Heart right ventricle (tissue), 16 donors: ENCODE measurements at regions of chr1 and their contacts with region 1.

Region 1: DNA sequence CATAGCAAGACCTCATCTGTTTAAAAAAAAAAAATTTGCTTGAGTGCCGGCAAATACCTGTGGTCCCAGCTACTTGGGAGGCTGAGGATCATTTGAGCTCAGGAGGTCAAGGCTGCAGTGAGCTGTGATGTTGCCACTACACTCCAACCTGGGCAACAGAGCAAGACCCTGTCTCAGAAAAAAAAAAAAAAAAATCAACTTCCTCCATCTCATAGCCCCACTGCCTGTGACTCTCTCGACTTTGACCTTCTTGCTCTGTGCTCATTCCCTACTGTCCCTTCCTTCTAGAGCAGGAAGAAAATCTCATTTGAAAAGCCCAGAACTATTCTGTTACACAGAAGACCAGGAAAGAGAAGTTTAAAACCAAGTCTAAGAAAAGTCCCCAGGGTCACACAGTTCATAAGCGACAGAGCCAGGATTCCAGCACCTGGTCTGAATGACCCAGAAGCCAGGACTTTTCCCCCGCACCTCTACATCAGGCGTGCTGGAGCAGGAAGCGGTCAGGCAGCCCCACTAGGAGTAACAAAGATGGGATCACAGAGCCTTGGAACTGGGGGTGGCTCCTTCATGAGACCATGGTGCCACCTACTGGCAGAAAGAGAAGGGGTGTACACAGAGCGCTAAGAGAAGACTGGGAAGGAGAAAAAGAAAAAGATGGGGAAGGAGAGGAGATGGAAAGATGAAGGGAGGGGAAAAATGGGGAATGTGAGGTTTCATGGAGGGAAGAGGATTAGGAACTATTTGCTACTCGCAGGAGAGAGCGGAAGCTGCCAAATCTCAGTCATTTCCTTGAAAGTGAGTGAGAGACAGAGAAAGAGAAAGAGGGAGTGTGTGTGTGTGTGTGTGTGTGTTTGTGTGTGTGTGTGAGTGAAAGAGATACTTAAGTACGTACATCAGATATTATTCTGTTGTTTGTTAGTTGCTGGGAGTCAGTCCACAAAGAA is 3.1 kb upstream of the P3R3URF start:
- DNase-seq: peak; percentile 59 to 88
- ATAC-seq: peak; percentile 72 to 92 (median 87)
- H3K4me3 ChIP-seq: peak overlapping the region in 2 of 10 donors; percentile 10 to 33
- H3K27ac ChIP-seq: peak overlapping the region in 8 of 10 donors; percentile 23 to 69 (median 56)
- H3K4me1 ChIP-seq: peaks cover 7 to 70% (median 42%) of the 10 kb centered on the region in 9 donors
- H3K27me3 ChIP-seq: no peaks in the 10 kb centered on the region
- CTCF ChIP-seq: peak; percentile 85 to 95 (median 89)

Region 2: GRCh38 chr1:45884700-45885099 is 294.7 kb before region 1 on chr1:
- intact Hi-C with region 1: loop called in 1 of 10 experiments (anchors 10 kb)
- DNase-seq: no peak
- ATAC-seq: no peak
- H3K4me3 ChIP-seq: no peak overlapping the region
- H3K27ac ChIP-seq: no peak overlapping the region
- H3K4me1 ChIP-seq: peaks cover 0 to 5% (median 0%) of the 10 kb centered on the region in 9 donors
- H3K27me3 ChIP-seq: no peaks in the 10 kb centered on the region
- CTCF ChIP-seq: no peak

Region 3: GRCh38 chr1:46036894-46037839 is 142.2 kb before region 1 on chr1:
- intact Hi-C with region 1: loop called (anchors 1 to 2 kb)
- DNase-seq: peak; percentile 82 to 89
- ATAC-seq: peak; percentile 42 to 81 (median 70)
- H3K4me3 ChIP-seq: no peak overlapping the region
- H3K27ac ChIP-seq: peak overlapping the region in 8 of 10 donors; percentile 2 to 46 (median 30)
- H3K4me1 ChIP-seq: peaks cover 8 to 64% (median 51%) of the 10 kb centered on the region in 9 donors
- H3K27me3 ChIP-seq: no peaks in the 10 kb centered on the region
- CTCF ChIP-seq: peak; percentile 96 to 98 (median 98)

Region 4: GRCh38 chr1:46094474-46095005 is 84.9 kb before region 1 on chr1:
- intact Hi-C with region 1: loop called in 1 of 10 experiments (anchors 5 kb)
- DNase-seq: no peak
- ATAC-seq: no peak
- H3K4me3 ChIP-seq: no peak overlapping the region
- H3K27ac ChIP-seq: no peak overlapping the region
- H3K4me1 ChIP-seq: peaks cover 0 to 13% (median 4%) of the 10 kb centered on the region in 9 donors
- H3K27me3 ChIP-seq: no peaks in the 10 kb centered on the region
- CTCF ChIP-seq: no peak

Region 5: GRCh38 chr1:46113948-46114347 is 65.5 kb before region 1 on chr1:
- intact Hi-C with region 1: loop called in 1 of 10 experiments (anchors 10 kb)
- DNase-seq: no peak
- ATAC-seq: peak in 1 of 8 donors; percentile 33
- H3K4me3 ChIP-seq: no peak overlapping the region
- H3K27ac ChIP-seq: no peak overlapping the region
- H3K4me1 ChIP-seq: peaks cover 0 to 78% (median 50%) of the 10 kb centered on the region in 9 donors
- H3K27me3 ChIP-seq: no peaks in the 10 kb centered on the region
- CTCF ChIP-seq: no peak

Region 6: DNA sequence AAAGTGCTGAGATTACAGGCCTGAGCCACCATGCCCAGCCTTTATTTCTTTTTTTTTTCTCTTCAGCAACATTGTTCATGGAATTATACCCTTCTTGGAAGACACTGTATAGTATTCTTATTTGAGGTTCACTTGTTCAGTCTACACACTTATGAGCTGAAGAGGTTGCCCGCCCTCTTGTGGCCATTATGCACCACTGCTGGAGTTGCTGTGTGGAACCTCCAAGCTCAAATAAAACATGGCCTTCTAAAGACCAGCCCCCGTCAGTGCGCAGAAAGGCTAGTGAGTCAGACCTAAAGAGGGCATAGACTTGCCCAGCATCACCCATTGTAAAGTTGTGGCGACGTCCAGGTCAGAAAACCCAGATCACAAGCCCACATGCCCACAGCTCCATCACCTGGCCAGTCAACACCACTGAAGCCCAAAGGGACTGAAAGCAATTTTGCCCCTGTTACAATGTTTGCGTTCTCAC is 44.1 kb after region 1 on chr1:
- intact Hi-C with region 1: loop called in 3 of 10 experiments (anchors 5 kb)
- DNase-seq: peak in 1 of 2 donors; percentile 60
- ATAC-seq: peak; percentile 83 to 91 (median 86)
- H3K4me3 ChIP-seq: no peak overlapping the region
- H3K27ac ChIP-seq: no peak overlapping the region
- H3K4me1 ChIP-seq: peaks cover 0 to 27% (median 0%) of the 10 kb centered on the region in 9 donors
- H3K27me3 ChIP-seq: no peaks in the 10 kb centered on the region
- CTCF ChIP-seq: peak; percentile 72 to 95 (median 90)